Cardiac septum (tissue), 1 donor: ENCODE measurements at regions of chr18 and their contacts with region 1.

Region 1: DNA sequence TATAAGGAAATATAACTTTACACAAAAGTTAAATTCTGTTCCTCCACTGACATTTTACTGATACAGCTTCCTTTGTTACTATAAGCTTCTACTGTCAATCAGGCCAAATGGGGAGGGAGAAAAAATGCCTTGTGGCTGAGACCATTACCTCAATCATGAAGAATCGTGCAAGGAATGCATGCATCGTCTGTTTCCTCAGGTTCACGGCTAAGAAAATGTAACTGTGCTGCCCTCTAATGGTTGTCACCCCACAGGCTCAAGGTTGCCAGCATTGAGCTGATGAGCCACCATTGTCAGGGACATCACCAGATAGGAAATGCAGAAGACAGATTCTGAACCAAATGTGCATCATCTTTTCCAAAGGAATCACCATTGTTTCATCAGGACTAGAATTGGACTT is 426.9 kb downstream of the CDH2 start:
- DNase-seq: no peak

Region 2: DNA sequence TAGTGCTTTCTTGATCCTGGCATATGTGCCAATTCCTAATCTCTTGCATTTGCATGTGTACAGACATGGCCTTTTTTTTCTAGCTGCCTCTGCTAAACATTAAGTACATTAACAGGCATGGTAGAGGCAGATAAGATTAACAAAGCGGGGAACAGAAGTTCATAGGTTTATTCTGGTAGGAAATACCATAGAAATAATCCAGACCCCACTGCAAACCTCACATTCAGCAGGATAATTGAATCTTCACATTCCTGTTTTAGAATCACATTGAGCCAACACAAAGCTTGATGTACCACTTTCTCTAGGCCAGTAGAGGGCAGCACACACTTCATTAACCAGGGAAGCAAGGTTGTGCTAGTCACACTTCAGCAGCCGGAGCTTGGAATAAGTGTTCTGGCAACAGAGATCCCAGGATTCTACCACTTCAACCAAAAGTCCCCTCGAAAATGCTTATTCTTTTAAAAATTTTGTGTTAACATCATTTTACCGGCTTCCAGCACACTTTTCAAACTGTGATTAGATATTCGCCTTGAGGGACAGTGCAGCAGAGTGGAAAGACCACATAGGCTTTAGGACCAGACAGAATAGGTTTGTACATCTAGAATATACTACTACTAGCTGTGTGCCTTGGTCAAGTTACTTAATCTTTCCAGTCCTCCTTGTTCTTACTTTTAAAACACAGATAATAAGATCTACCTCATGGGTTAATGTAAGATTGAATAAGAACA is 144.7 kb before region 1 on chr18:
- intact Hi-C with region 1: loop called (anchors 5 kb)
- DNase-seq: no peak

Region 3: DNA sequence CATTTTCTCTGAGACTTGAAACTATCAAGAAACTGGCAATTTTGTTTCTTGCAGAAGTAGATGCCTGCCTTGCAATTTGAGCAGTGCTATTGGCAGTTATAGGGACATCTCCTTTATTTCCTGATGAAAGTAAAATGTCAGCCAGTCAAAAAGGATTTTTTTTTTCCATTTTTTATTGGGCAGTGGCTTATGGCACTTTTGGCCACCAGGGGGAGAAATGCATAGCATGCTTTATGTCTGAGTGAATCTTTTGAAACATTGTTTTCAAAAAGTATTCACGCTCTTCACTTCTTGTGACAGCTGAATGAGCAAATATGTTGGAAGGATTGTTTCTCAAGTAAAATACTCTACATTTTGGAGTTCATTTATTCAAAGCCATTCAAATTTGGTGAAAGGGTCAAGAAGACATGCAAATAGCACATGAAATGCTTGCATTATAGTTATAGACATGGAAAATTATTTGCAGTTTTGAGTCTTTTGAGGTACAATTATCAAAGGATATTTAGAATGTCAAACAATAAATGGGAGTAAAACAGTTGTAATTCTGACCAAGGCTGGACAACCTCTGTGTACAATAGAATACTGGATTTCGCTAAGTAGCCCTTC is 64.1 kb before region 1 on chr18:
- intact Hi-C with region 1: loop called (anchors 5 kb)
- DNase-seq: no peak